HepG2 (cell line): ENCODE measurements at regions of chr9 and their contacts with region 1.

Region 1: GRCh38 chr9:137034863-137035761 is 3.2 kb upstream of the FUT7 start:
- DNase-seq: peak; percentile 71
- ATAC-seq: peak; percentile 87
- H3K4me3 ChIP-seq: peak overlapping the region in 1 of 3 experiments; percentile 36; a peak in 1 of 6 replicates
- H3K27ac ChIP-seq: no peak overlapping the region
- H3K4me1 ChIP-seq: peaks cover 48% of the 10 kb centered on the region
- H3K27me3 ChIP-seq: peaks cover 0 to 8% of the 10 kb centered on the region in 2 experiments; a peak in 1 of 5 replicates
- CTCF ChIP-seq: peak; percentile 99
- EP300 ChIP-seq: no peak
- POLR2A ChIP-seq: no peak
- RAD21 ChIP-seq: peak; percentile 91

Region 2: DNA sequence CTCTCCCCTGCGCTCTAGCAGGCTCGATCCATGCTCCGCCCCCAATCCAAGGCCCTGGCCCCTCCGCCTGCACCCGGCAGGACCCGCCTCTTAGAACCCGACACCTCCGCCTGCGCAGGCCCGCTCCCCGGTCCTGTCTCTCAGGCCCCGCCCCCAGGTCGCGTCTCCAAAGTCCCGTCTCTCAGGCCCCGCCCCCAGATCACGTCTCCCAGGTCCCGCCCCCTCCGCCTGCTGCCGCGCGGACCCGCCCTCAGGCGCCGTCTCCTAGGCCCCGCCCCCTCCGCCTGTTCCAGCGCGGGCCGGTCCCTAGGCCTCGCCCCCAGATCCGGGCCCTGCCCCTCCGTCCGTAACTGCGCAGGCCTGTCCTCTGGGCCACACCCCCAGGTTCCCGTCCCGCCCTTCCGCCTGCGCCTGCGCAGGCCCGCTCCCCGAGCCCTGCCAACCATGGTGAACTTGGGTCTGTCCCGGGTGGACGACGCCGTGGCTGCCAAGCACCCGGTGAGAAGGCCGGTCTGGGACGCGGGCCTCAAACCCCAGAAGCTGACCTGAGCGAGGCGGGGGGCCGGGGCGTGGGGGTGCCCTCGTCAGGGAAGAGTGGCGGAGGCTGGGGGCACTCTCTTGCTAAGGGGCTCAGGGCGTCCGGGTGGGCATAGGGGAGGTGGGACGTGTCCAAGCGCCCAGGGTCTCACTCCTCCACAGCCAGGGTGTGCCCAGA is 244.0 kb before region 1 on chr9 and contains the start of gene TMEM141:
- CTCF ChIA-PET with region 1: interaction called, 10 read pairs
- POLR2A ChIA-PET with region 1: interaction called, 4 read pairs
- in situ Hi-C with region 1: no loop called
- intact Hi-C with region 1: loop called (anchors 1 kb)
- DNase-seq: peak; percentile 97
- ATAC-seq: peak; percentile 84
- H3K4me3 ChIP-seq: peak within 1 kb of the TSS; percentile 78 to 98 (median 82)
- H3K27ac ChIP-seq: peak within 1 kb of the TSS; percentile 91
- H3K4me1 ChIP-seq: peaks cover 82% of the 10 kb centered on the region
- H3K27me3 ChIP-seq: no peaks in the 10 kb centered on the region; a peak in 1 of 5 replicates
- CTCF ChIP-seq: no peak
- EP300 ChIP-seq: no peak
- POLR2A ChIP-seq: peak in 1 of 2 experiments; percentile 5; a peak in 1 of 4 replicates
- RAD21 ChIP-seq: no peak
- total RNA-seq, gene TMEM141: 81.0 and 84.7 TPM in 2 replicates

Region 3: DNA sequence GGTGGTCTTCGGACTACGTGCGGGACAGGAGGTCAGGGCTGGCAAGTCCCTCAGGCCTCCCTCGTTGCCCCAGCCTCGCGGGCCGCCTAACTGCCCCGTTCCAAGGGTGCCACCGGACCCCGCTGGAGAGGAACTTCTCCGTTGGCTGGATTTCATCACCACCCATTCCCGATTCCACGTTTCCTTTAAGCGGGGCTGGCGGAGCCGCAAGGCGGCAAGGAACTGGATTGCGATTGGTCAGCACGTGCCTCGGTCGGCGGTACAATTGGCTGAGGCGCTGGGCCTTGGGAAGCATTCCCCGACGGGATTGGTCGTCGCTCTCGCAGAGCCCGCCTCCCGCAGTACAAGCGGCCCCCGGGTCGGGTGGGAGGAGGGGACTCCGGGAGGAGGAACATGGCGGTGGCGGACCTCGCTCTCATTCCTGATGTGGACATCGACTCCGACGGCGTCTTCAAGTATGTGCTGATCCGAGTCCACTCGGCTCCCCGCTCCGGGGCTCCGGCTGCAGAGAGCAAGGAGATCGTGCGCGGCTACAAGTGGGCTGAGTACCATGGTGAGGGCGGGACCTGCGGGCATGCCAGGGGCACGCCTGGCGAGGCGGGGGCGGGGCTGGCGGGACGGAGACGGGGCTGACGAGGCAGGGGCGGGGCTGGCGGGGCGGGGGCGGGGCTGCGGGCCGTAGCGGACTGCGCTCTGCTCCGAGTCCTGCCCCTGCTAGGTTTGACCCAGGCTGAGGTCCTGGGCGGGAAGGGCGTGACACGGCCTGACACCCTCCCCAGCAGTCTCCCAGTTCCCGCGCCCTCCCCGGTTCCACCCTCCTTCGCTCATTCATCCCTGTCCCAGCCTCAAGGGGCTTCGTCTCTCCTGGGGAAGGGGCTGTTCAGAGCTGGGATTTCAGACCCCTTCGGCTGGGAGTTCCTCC is 185.8 kb before region 1 on chr9 and contains the start of gene PHPT1:
- CTCF ChIA-PET with region 1: no interaction called
- POLR2A ChIA-PET with region 1: no interaction called
- in situ Hi-C with region 1: loop called (anchors 10 kb)
- intact Hi-C with region 1: no loop called
- DNase-seq: peak; percentile 97
- ATAC-seq: peak; percentile 73
- H3K4me3 ChIP-seq: peak within 1 kb of the TSS; percentile 88 to 98 (median 91)
- H3K27ac ChIP-seq: peak within 1 kb of the TSS; percentile 91
- H3K4me1 ChIP-seq: peaks cover 25% of the 10 kb centered on the region
- H3K27me3 ChIP-seq: no peaks in the 10 kb centered on the region; a peak in 1 of 5 replicates
- CTCF ChIP-seq: no peak
- EP300 ChIP-seq: no peak
- POLR2A ChIP-seq: peak in 1 of 2 experiments; percentile 95; a peak in 2 of 4 replicates
- RAD21 ChIP-seq: peak; percentile 13; the same call in 1 of the 2 replicates
- total RNA-seq, gene PHPT1: 155 and 192 TPM in 2 replicates

Region 4: GRCh38 chr9:136944519-136945279 is 90.4 kb before region 1 on chr9 and contains the starts of genes C8G and FBXW5:
- CTCF ChIA-PET with region 1: interaction called, 15 read pairs
- POLR2A ChIA-PET with region 1: interaction called, 10 read pairs
- in situ Hi-C with region 1: loop called (anchors 5 kb)
- intact Hi-C with region 1: loop called (anchors 2 kb)
- DNase-seq: peak; percentile 87
- ATAC-seq: peak; percentile 25
- H3K4me3 ChIP-seq: peak within 1 kb of the TSS; percentile 90 to 95 (median 91)
- H3K27ac ChIP-seq: peak within 1 kb of the TSS; percentile 75
- H3K4me1 ChIP-seq: peaks cover 44% of the 10 kb centered on the region
- H3K27me3 ChIP-seq: no peaks in the 10 kb centered on the region
- CTCF ChIP-seq: peak; percentile 92
- EP300 ChIP-seq: no peak; a peak in 1 of 4 replicates
- POLR2A ChIP-seq: no peak
- RAD21 ChIP-seq: peak; percentile 52; the same call in 1 of the 2 replicates
- total RNA-seq, gene C8G: 2.0 and 4.9 TPM in 2 replicates
- total RNA-seq, gene FBXW5: 47.4 and 60.4 TPM in 2 replicates

Region 5: GRCh38 chr9:136949817-136950655 is 85.1 kb before region 1 on chr9:
- CTCF ChIA-PET with region 1: interaction called, 15 read pairs
- POLR2A ChIA-PET with region 1: interaction called, 10 read pairs
- in situ Hi-C with region 1: loop called (anchors 5 kb)
- intact Hi-C with region 1: loop called (anchors 2 kb)
- DNase-seq: peak; percentile 94
- ATAC-seq: peak; percentile 80
- H3K4me3 ChIP-seq: peak overlapping the region; percentile 68 to 90 (median 87)
- H3K27ac ChIP-seq: peak overlapping the region; percentile 95
- H3K4me1 ChIP-seq: peaks cover 56% of the 10 kb centered on the region
- H3K27me3 ChIP-seq: no peaks in the 10 kb centered on the region
- CTCF ChIP-seq: peak; percentile 58
- EP300 ChIP-seq: no peak; a peak in 1 of 4 replicates
- POLR2A ChIP-seq: peak in 1 of 2 experiments; percentile 42; a peak in 1 of 4 replicates
- RAD21 ChIP-seq: peak; percentile 25

Region 6: GRCh38 chr9:137016436-137016835 is 18.7 kb before region 1 on chr9:
- CTCF ChIA-PET with region 1: no interaction called
- POLR2A ChIA-PET with region 1: no interaction called
- in situ Hi-C with region 1: no loop called
- intact Hi-C with region 1: no loop called
- DNase-seq: no peak
- ATAC-seq: no peak
- H3K4me3 ChIP-seq: no peak overlapping the region
- H3K27ac ChIP-seq: no peak overlapping the region
- H3K4me1 ChIP-seq: peaks cover 3% of the 10 kb centered on the region
- H3K27me3 ChIP-seq: no peaks in the 10 kb centered on the region
- CTCF ChIP-seq: no peak
- EP300 ChIP-seq: no peak
- POLR2A ChIP-seq: no peak
- RAD21 ChIP-seq: no peak

Region 7: DNA sequence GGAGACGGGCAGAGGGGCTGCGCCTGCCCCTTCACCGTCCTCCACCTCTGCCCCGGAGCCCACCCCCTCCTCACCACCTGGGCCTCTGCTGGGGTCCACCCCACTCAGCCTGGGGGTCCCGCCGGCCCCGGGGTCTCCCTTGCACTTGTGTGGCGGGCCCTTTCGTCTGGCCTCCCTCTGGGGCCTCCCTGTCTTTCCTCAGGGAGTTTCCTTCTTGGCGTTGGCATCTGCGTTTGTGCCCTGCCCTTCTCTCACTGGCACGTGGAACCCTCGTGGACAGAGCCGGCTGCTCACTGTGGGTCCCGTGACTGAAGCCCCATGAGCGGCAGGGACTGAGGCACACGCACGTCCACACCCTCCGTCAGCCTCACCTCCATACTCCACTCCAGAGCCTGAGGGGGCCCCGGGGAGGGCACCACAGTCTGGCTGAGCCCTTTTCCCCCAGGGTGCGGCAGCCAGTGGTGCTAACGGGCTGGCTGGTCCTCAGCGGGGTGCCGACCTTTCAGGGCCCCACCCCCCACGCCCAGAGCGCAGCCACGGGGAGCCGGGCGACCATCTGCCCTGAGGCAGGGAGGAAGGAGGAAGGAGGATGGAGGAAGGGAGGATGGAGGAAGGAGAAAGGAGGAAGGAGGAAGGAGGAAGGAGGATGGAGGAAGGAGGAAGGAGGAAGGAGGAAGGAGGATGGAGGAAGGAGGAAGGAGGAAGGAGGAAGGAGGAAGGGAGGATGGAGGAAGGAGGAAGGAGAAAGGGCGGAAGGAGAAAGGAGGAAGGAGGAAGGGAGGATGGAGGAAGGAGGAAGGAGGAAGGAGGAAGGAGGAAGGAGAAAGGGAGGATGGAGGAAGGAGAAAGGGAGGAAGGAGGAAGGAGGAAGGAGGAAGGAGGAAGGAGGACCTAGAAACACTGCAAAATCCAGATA is 320.0 kb after region 1 on chr9:
- CTCF ChIA-PET with region 1: no interaction called
- POLR2A ChIA-PET with region 1: no interaction called
- in situ Hi-C with region 1: no loop called
- intact Hi-C with region 1: no loop called
- DNase-seq: no peak
- ATAC-seq: no peak
- H3K4me3 ChIP-seq: no peak overlapping the region
- H3K27ac ChIP-seq: no peak overlapping the region
- H3K4me1 ChIP-seq: peaks cover 12% of the 10 kb centered on the region
- H3K27me3 ChIP-seq: no peaks in the 10 kb centered on the region; a peak in 1 of 5 replicates
- CTCF ChIP-seq: no peak
- EP300 ChIP-seq: no peak
- POLR2A ChIP-seq: no peak
- RAD21 ChIP-seq: no peak